ENCODE measurements at regions of chr1 and their contacts with region 1.

Region 1: DNA sequence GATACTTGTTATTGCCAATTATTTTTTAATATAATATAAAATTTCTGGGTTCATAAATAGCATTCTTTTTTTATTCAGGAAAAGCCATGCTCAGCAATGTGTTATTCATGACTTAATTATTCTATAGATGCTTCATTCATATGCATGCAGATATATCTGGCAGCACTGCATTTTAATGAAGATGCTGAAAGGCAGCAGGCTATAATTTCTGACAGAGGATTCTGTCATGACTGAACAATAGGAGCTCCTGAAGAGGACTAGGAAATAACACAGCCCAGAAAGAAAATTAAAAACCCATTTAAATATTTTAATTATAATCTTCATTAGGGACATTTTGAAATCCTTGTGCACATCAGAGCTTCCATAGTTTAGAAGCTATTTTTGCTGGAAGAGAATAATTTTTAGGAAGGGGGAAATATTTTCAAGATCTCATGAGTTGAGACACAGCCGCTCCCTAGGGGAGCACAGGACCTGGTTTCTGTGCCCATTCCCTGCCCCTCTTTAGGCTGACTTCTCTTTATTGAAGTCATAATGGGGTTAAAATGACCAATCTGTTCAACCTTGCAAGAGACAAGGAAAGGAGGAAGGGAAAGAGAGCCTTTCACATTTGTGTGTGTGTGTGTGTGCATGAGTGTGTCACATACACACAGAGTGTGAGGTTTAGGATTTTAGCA is 83.9 kb downstream of the RPE65 start:
- DNase-seq: no peak
- H3K4me3 ChIP-seq: no peak overlapping the region
- H3K27me3 ChIP-seq: no peaks in the 10 kb centered on the region
- CTCF ChIP-seq: no peak

Region 2: DNA sequence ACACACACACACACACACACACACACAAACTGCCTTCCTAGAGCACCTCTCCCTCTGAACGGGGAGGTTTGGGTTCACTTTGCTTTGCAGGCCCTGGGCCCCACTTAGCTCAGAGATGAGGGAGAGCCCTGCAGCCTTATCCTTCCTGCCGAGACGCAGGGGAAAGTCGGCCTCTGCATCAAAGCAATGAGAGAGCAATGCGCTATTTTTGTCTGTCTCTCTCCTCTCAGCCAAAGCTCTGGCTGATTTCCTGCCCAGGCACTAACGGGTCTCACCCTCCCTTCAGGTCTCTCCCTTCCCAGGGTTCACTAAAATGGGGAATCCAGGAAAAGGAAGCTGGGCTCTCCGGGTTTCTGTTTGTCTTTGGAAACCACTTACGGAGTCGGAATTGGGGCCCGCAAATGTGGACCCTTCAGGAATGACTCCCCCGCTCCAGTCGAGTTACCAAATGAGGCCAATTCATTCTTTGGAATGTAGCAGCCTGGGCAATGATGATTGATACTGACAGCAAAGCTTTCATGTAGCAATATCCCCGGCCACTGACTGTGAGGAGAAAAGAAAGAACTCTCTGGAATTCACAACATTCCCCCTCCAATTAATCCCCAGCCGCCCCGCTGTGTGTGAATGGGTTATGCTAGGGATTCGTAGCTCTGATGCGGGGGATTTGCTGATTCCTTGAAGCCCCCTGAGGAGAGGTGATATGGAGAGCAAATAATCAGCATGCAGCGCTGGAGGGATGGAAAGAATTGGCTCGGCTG is 72.1 kb before region 1 on chr1:
- CTCF ChIA-PET with region 1: no interaction called
- POLR2A ChIA-PET with region 1: no interaction called
- DNase-seq: no peak
- H3K4me3 ChIP-seq: no peak overlapping the region
- H3K27me3 ChIP-seq: no peaks in the 10 kb centered on the region; the same call in 1 of the 2 replicates
- CTCF ChIP-seq: no peak

Region 3: GRCh38 chr1:68346188-68346808 is 19.5 kb before region 1 on chr1:
- CTCF ChIA-PET with region 1: interaction called, 16 read pairs
- POLR2A ChIA-PET with region 1: no interaction called
- DNase-seq: no peak
- H3K4me3 ChIP-seq: no peak overlapping the region
- H3K27me3 ChIP-seq: peaks cover 6% of the 10 kb centered on the region
- CTCF ChIP-seq: peak; percentile 50

Region 4: GRCh38 chr1:69045572-69045971 is 679.7 kb after region 1 on chr1:
- CTCF ChIA-PET with region 1: no interaction called
- POLR2A ChIA-PET with region 1: no interaction called
- DNase-seq: no peak
- H3K4me3 ChIP-seq: no peak overlapping the region
- H3K27me3 ChIP-seq: no peaks in the 10 kb centered on the region
- CTCF ChIP-seq: no peak